Activated CD4-positive, alpha-beta T cell treated with anti-CD3 and anti-CD28 coated beads, Interleukin-2, amount 10 ng/mL, durations not matched to agents 7 days and 5 days (primary cell): ENCODE measurements at regions of chr1 and their contacts with region 1.

Region 1: DNA sequence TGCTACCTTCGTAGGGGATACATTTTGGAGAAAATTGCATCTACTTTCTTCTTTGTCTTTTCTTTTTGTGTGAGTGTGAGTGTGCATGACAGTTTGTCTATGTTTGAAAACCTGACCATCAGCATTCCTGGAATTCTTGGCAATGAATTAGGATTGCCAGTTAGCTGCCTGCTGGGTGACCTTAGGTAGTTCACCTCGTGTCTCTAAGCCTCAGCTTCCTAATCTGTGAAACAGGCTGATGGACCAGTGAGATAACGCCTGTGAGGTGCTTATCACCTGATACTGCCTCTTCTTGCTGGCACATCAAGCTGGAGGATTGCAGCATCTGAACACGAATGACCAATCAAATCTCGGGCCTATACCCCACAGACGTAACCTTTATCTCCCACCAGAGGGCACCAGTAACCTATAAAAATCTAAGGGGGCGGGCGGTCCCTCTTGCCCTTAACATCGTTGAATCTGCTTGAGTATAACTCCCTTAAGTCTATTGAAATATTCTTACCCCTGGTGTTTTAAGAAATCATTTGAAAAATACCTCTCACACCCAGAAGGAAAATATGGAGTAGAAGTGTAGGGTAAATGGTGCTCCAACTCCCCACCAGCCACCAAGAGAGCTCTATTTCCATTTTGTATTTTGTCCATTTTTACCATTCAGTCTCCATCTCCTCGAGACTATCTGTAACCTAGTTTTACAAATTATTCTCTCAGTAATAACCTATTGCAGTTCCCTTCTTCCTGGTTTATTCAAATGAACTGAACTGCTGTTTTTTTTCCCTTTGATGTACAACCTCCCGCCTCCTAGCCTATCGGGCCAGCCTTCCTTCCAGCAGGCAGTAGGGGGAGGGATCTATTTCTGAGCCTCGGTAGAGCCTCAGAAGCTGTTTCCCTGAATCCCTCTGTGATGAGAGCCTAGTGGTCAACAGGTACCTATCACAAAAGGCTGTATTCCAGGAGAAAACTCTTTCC is 49.7 kb downstream of the MDM4 start:
- DNase-seq: peak; percentile 75
- H3K4me3 Mint-ChIP-seq: no peak overlapping the region
- H3K27ac Mint-ChIP-seq: peak overlapping the region; percentile 63
- H3K4me1 Mint-ChIP-seq: peaks cover 68% of the 10 kb centered on the region
- H3K27me3 Mint-ChIP-seq: no peaks in the 10 kb centered on the region

Region 2: GRCh38 chr1:204578867-204579664 is 13.2 kb after region 1 on chr1:
- CTCF ChIA-PET with region 1: interaction called, 16 read pairs
- POLR2A ChIA-PET with region 1: no interaction called
- DNase-seq: peak; percentile 67
- H3K4me3 Mint-ChIP-seq: peak overlapping the region; percentile 75
- H3K27ac Mint-ChIP-seq: peak overlapping the region; percentile 97
- H3K4me1 Mint-ChIP-seq: peaks cover 44% of the 10 kb centered on the region
- H3K27me3 Mint-ChIP-seq: no peaks in the 10 kb centered on the region

Region 3: DNA sequence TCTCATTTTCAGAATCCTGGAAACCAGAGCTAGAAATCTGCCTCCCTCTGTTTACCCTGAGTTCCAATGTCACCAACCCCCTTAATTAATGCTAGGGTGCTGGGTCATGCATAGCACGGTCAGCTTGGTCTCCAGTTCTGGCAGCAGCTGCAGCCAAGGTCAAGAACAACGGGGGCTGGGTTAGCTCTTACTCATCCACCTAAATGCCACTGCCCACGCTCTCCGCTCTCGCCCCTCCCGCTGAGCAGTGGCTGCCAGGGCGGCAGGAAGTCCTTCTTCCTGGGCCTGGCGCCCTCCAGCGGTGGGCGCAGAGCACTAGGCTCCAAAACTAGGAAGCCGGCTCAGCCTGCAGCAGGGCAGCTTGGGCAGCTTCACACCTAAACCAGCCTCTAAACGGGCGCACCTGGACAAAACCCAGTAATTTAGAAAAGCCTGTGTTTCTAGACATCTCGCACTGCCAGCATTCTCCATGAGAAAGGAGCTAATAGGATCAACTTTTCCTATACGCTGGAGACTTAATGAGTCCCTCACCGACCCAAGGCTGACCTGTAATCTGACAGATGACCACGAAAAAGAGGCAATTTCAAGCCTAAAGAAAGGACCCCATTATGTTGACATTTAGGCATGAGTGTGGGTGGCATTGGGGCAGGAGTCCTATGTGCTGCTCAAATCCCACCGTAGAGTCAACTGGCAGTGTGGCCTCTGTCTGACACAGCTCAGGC is 198.0 kb after region 1 on chr1:
- CTCF ChIA-PET with region 1: interaction called, 13 read pairs
- POLR2A ChIA-PET with region 1: no interaction called
- DNase-seq: peak; percentile 74
- H3K4me3 Mint-ChIP-seq: peak overlapping the region; percentile 20
- H3K27ac Mint-ChIP-seq: peak overlapping the region; percentile 6
- H3K4me1 Mint-ChIP-seq: peaks cover 8% of the 10 kb centered on the region
- H3K27me3 Mint-ChIP-seq: peaks cover 42% of the 10 kb centered on the region